Heart left ventricle (tissue), 16 donors: ENCODE measurements at regions of chr20 and their contacts with region 1.

Region 1: GRCh38 chr20:63627129-63627750 is 339 bp upstream of the GMEB2 start:
- DNase-seq: peak; percentile 94 to 98 (median 96)
- ATAC-seq: peak; percentile 84 to 93 (median 92)
- H3K4me3 ChIP-seq: peak overlapping the region; percentile 58 to 99 (median 88)
- H3K27ac ChIP-seq: peak overlapping the region; percentile 88 to 99 (median 97)
- H3K4me1 ChIP-seq: peaks cover 0 to 33% (median 15%) of the 10 kb centered on the region in 12 donors
- H3K27me3 ChIP-seq: no peaks in the 10 kb centered on the region
- CTCF ChIP-seq: no peak
- POLR2A ChIP-seq: peak in 1 of 2 donors; percentile 81

Region 2: GRCh38 chr20:63574156-63574828 is 52.9 kb before region 1 on chr20 and contains the start of gene HELZ2:
- intact Hi-C with region 1: no loop called
- DNase-seq: peak; percentile 81 to 90 (median 85)
- ATAC-seq: peak; percentile 39 to 82 (median 78)
- H3K4me3 ChIP-seq: peak within 1 kb of the TSS; percentile 65 to 99 (median 86)
- H3K27ac ChIP-seq: peak within 1 kb of the TSS; percentile 54 to 96 (median 86)
- H3K4me1 ChIP-seq: peaks cover 0 to 36% (median 18%) of the 10 kb centered on the region in 12 donors
- H3K27me3 ChIP-seq: peaks cover 0 to 17% (median 0%) of the 10 kb centered on the region in 9 donors
- CTCF ChIP-seq: no peak
- POLR2A ChIP-seq: no peak
- total RNA-seq, gene HELZ2: 10.4 to 34.6 (median 20.9) TPM

Region 3: GRCh38 chr20:63587776-63588591 is 39.3 kb before region 1 on chr20:
- intact Hi-C with region 1: loop called in 1 of 10 experiments (anchors 5 kb)
- DNase-seq: peak in 3 of 5 donors; percentile 20 to 48 (median 22)
- ATAC-seq: peak in 1 of 4 donors; percentile 32
- H3K4me3 ChIP-seq: no peak overlapping the region
- H3K27ac ChIP-seq: peak overlapping the region in 2 of 12 donors; percentile 27 to 37
- H3K4me1 ChIP-seq: no peaks in the 10 kb centered on the region
- H3K27me3 ChIP-seq: no peaks in the 10 kb centered on the region
- CTCF ChIP-seq: no peak
- POLR2A ChIP-seq: no peak

Region 4: DNA sequence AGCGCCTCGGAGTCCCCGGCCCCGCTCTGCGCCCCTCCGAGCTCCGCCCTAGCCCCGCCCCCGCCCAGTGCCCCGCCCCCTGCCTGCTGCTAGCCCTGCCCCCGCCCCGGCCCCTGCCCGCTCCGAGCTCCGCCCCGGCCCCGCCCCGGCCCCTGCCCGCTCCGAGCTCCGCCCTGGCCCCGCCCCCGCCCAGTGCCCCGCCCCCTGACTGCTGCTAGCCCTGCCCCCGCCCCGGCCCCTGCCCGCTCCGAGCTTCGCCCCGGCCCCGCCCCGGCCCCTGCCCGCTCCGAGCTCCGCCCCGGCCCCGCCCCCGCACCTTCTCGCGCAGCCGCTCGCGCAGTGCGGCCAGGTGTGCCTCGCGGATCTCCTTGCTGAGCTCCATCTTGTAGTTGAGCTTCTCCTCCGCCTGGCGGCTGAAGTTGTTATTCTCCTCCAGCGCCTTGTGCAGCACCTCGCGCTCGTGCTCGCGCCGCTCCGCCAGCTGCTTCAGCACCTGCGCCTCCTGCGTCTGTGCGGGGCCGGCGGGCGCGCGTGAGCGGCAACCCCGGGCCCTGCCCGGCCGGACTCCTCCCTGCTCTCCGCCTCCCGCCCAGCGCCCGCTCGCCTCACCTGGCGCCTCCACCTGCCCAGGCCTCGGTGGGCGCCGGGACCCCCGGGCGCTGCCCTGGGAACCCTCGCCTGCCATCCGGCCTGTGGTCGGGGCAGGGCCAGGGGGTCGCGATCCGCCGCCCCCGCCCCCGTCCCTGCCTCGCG is 14.7 kb after region 1 on chr20:
- intact Hi-C with region 1: loop called in 1 of 10 experiments (anchors 2 kb)
- DNase-seq: peak; percentile 87 to 95 (median 92)
- ATAC-seq: peak; percentile 72 to 89 (median 86)
- H3K4me3 ChIP-seq: peak overlapping the region; percentile 43 to 79 (median 66)
- H3K27ac ChIP-seq: peak overlapping the region; percentile 78 to 99 (median 90)
- H3K4me1 ChIP-seq: peaks cover 0 to 36% (median 14%) of the 10 kb centered on the region in 12 donors
- H3K27me3 ChIP-seq: no peaks in the 10 kb centered on the region
- CTCF ChIP-seq: peak in 10 of 12 donors; percentile 5 to 53 (median 23)
- POLR2A ChIP-seq: no peak

Region 5: GRCh38 chr20:63657937-63658748 is 30.9 kb after region 1 on chr20 and contains the start of gene RTEL1:
- intact Hi-C with region 1: loop called in 1 of 10 experiments (anchors 2 kb)
- DNase-seq: peak; percentile 94 to 96 (median 95)
- ATAC-seq: peak; percentile 91 to 97 (median 96)
- H3K4me3 ChIP-seq: peak within 1 kb of the TSS; percentile 61 to 91 (median 78)
- H3K27ac ChIP-seq: peak within 1 kb of the TSS; percentile 65 to 98 (median 89)
- H3K4me1 ChIP-seq: peaks cover 3 to 33% (median 21%) of the 10 kb centered on the region in 12 donors
- H3K27me3 ChIP-seq: peaks cover 0 to under 1% (median 0%) of the 10 kb centered on the region in 9 donors
- CTCF ChIP-seq: peak in 1 of 12 donors; percentile 10
- POLR2A ChIP-seq: peak in 1 of 2 donors; percentile 35
- total RNA-seq, gene RTEL1: 3.0 to 17.8 (median 10.1) TPM

Region 6: DNA sequence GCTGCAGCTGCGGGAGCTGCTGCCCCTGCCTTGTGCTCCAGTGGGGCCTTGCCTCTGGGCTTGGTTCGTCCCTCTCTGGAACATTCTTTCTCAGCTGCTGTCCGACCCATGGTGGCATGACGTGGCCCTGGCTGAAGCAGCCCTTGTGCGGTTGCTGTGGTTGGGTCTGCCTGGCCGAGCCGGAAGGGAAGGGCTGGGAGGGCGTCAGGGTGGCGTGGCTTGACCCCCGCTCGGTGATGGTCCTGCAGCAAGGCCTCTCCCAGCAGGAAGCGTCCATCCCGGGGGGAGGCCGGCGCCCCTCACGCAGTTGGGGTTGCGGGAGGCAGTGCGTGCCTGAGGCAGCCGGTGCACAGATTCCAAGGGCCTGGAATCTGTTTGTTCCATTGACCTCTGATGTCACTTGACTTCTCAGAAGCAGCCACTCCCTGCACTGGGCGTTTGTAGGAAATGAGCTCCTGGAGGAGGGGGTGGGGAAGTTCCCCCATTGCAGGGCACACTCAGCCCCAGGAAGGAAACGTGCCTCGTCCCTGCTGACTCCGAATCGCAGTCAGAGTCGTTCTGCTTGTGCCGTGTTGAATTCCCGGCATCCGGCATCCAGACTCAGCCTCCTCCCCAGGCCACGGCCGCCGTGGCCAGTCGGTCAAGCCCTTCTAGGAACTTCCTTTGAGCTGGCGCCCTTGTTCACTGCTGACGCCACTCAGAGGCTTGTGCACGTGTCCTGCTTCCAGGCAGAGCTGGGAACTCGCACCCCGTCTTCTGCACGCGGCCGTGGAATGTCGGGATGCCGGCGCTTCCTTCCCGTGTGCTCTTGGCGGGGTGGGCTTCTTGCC is 59.5 kb after region 1 on chr20:
- intact Hi-C with region 1: loop called in 1 of 10 experiments (anchors 2 kb)
- DNase-seq: peak; percentile 86 to 92 (median 87)
- ATAC-seq: peak; percentile 60 to 84 (median 68)
- H3K4me3 ChIP-seq: peak overlapping the region in 9 of 12 donors; percentile 5 to 39 (median 20)
- H3K27ac ChIP-seq: peak overlapping the region; percentile 22 to 99 (median 88)
- H3K4me1 ChIP-seq: peaks cover 19 to 83% (median 50%) of the 10 kb centered on the region in 12 donors
- H3K27me3 ChIP-seq: no peaks in the 10 kb centered on the region
- CTCF ChIP-seq: no peak
- POLR2A ChIP-seq: peak in 1 of 2 donors; percentile 36